ENCODE measurements at regions of chr14 and their contacts with region 1.

Region 1: GRCh38 chr14:54189748-54190354 is 207.0 kb upstream of the CDKN3 start:
- DNase-seq: no peak
- H3K4me3 ChIP-seq: no peak overlapping the region
- H3K27ac ChIP-seq: no peak overlapping the region
- H3K27me3 ChIP-seq: no peaks in the 10 kb centered on the region
- CTCF ChIP-seq: no peak

Region 2: GRCh38 chr14:54133896-54134295 is 56.0 kb before region 1 on chr14:
- CTCF ChIA-PET with region 1: no interaction called
- POLR2A ChIA-PET with region 1: no interaction called
- DNase-seq: no peak
- H3K4me3 ChIP-seq: no peak overlapping the region
- H3K27ac ChIP-seq: no peak overlapping the region
- H3K27me3 ChIP-seq: no peaks in the 10 kb centered on the region
- CTCF ChIP-seq: no peak

Region 3: DNA sequence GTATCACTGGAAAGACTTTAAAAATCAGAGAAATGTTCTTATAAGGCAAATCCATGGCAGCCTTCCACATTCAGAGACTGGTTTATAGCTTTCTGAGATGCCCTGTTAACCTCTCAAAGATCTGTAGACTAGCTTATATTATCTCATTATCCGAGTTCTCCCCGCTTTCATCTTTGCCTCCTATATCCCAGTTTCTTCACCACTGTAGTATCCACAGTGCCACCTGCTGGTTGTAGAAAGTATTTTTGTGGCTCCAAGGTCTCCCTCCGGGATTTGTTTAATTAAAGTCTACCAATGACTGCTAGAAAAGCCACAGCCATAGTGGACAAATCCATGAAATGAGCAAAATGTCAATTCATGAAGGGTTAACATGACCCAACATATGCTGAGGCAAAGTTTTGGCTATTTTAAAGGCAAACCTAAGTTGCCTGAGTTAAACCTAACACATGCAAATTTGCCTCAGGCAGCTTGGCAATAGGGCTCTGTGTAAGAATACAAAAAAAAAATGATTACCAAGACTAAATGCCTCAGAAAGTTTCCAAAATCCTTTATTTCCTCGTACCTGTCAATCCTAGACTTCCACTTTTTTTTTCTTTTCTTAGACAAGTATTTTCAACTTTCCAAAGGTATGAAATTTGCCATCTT is 14.4 kb before region 1 on chr14:
- CTCF ChIA-PET with region 1: interaction called, 61 read pairs
- POLR2A ChIA-PET with region 1: no interaction called
- DNase-seq: peak; percentile 43
- H3K4me3 ChIP-seq: no peak overlapping the region
- H3K27ac ChIP-seq: no peak overlapping the region
- H3K27me3 ChIP-seq: peaks cover 10% of the 10 kb centered on the region
- CTCF ChIP-seq: peak; percentile 85

Region 4: GRCh38 chr14:54220071-54220703 is 30.3 kb after region 1 on chr14:
- CTCF ChIA-PET with region 1: no interaction called
- POLR2A ChIA-PET with region 1: no interaction called
- DNase-seq: no peak
- H3K4me3 ChIP-seq: peak overlapping the region; percentile 36
- H3K27ac ChIP-seq: no peak overlapping the region
- H3K27me3 ChIP-seq: peaks cover 24% of the 10 kb centered on the region
- CTCF ChIP-seq: no peak

Measured in AG04450 (cell line).